PC-9 (cell line): ENCODE measurements at regions of chr3 and their contacts with region 1.

Region 1: GRCh38 chr3:72353236-72354128 is 494.8 kb downstream of the SHQ1 start:
- DNase-seq: no peak
- H3K4me3 ChIP-seq: no peak overlapping the region
- H3K27ac ChIP-seq: no peak overlapping the region
- H3K4me1 ChIP-seq: no peaks in the 10 kb centered on the region
- H3K27me3 ChIP-seq: no peaks in the 10 kb centered on the region
- CTCF ChIP-seq: no peak

Region 2: DNA sequence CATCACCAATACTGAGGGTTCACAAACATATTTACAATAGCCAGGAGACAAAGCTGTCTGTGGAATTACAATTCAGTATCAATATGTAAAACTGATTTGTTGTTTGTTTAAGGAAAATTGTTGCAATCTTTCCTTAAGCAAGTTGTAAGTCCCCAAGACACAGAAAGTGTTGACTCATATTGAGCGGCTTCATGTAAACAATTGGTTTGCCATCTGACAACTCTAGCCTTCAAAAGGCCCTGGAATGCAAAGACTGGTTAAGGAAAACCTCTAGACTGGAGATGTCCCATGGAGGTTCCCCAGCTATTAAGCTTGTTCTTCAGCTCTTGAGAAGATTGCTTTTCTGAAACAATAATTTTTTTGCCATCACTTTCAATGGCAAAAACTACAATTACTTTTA is 284.9 kb before region 1 on chr3:
- CTCF ChIA-PET with region 1: no interaction called
- POLR2A ChIA-PET with region 1: no interaction called
- intact Hi-C with region 1: no loop called
- DNase-seq: no peak
- H3K4me3 ChIP-seq: no peak overlapping the region
- H3K27ac ChIP-seq: no peak overlapping the region
- H3K4me1 ChIP-seq: no peaks in the 10 kb centered on the region
- H3K27me3 ChIP-seq: no peaks in the 10 kb centered on the region; the same call in 1 of the 2 replicates
- CTCF ChIP-seq: no peak

Region 3: DNA sequence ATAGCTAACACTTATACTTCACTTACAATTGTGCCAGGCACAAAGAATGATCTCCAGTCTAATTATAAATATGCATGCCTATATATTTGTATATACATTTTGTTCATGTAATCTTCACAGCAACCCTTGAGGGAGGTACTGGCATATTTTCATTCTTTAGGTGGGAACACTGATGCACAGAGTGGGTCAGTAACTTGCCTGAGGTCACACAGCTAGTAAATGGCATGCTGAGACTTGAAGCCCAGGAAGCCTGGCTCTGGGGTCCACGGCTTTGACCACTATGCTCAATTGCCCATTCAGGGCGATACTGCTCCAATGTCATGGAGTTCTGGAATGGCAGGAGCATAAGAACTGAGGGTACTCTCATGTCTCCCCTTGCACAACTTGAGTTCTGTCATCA is 355.0 kb after region 1 on chr3:
- CTCF ChIA-PET with region 1: no interaction called
- POLR2A ChIA-PET with region 1: interaction called, 11 read pairs
- intact Hi-C with region 1: no loop called
- DNase-seq: no peak
- H3K4me3 ChIP-seq: no peak overlapping the region
- H3K27ac ChIP-seq: no peak overlapping the region
- H3K4me1 ChIP-seq: no peaks in the 10 kb centered on the region
- H3K27me3 ChIP-seq: no peaks in the 10 kb centered on the region
- CTCF ChIP-seq: no peak